Caco-2 (cell line): ENCODE measurements at regions of chr10 and their contacts with region 1.

Region 1: GRCh38 chr10:116385994-116386809 is 41.4 kb upstream of the PNLIPRP3 start:
- DNase-seq: peak in 1 of 2 experiments; percentile 39
- H3K4me3 ChIP-seq: no peak overlapping the region
- H3K4me3 Mint-ChIP-seq: no peak overlapping the region
- H3K27ac Mint-ChIP-seq: no peak overlapping the region
- H3K4me1 ChIP-seq: no peaks in the 10 kb centered on the region
- H3K4me1 Mint-ChIP-seq: peaks cover 5% of the 10 kb centered on the region
- H3K27me3 ChIP-seq: no peaks in the 10 kb centered on the region
- H3K27me3 Mint-ChIP-seq: peaks cover 11% of the 10 kb centered on the region
- CTCF ChIP-seq: peak; percentile 39 to 64

Region 2: GRCh38 chr10:115355162-115355760 is 1030.9 kb before region 1 on chr10:
- CTCF ChIA-PET with region 1: no interaction called
- POLR2A ChIA-PET with region 1: no interaction called
- intact Hi-C with region 1: loop called (anchors 1 kb)
- DNase-seq: peak; percentile 68 to 74
- H3K4me3 ChIP-seq: no peak overlapping the region
- H3K4me3 Mint-ChIP-seq: no peak overlapping the region
- H3K27ac Mint-ChIP-seq: no peak overlapping the region
- H3K4me1 ChIP-seq: no peaks in the 10 kb centered on the region
- H3K4me1 Mint-ChIP-seq: no peaks in the 10 kb centered on the region
- H3K27me3 ChIP-seq: no peaks in the 10 kb centered on the region
- H3K27me3 Mint-ChIP-seq: peaks cover 4% of the 10 kb centered on the region
- CTCF ChIP-seq: peak; percentile 77 to 81

Region 3: GRCh38 chr10:115706026-115706781 is 680.0 kb before region 1 on chr10:
- CTCF ChIA-PET with region 1: no interaction called
- POLR2A ChIA-PET with region 1: no interaction called
- intact Hi-C with region 1: loop called (anchors 1 kb)
- DNase-seq: peak in 1 of 2 experiments; percentile 13
- H3K4me3 ChIP-seq: no peak overlapping the region
- H3K4me3 Mint-ChIP-seq: no peak overlapping the region
- H3K27ac Mint-ChIP-seq: no peak overlapping the region
- H3K4me1 ChIP-seq: no peaks in the 10 kb centered on the region
- H3K4me1 Mint-ChIP-seq: no peaks in the 10 kb centered on the region
- H3K27me3 ChIP-seq: no peaks in the 10 kb centered on the region
- H3K27me3 Mint-ChIP-seq: peaks cover 10% of the 10 kb centered on the region
- CTCF ChIP-seq: peak; percentile 33 to 48

Region 4: DNA sequence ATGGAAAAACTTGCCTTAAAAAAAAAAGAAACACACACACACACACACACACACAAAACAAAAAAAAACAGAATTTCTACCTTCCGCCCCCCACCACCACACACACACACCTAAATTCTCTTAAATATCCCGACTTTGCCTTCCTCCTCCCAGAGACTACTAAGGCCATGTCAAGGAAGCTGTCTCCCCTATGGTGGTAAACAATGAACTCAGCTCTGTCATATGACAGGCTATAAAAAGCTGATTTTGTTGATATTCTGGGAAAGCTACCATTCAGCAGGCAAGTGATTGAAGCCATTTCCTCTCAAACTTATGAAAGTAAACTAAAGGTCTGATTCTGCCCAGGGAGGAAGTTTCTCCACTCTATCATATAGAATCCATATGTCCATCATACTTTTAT is 584.2 kb before region 1 on chr10:
- CTCF ChIA-PET with region 1: no interaction called
- POLR2A ChIA-PET with region 1: no interaction called
- intact Hi-C with region 1: loop called (anchors 1 kb)
- DNase-seq: no peak
- H3K4me3 ChIP-seq: no peak overlapping the region
- H3K4me3 Mint-ChIP-seq: no peak overlapping the region
- H3K27ac Mint-ChIP-seq: no peak overlapping the region
- H3K4me1 ChIP-seq: no peaks in the 10 kb centered on the region
- H3K4me1 Mint-ChIP-seq: no peaks in the 10 kb centered on the region
- H3K27me3 ChIP-seq: no peaks in the 10 kb centered on the region; the same call in 1 of the 2 replicates
- H3K27me3 Mint-ChIP-seq: peaks cover 9% of the 10 kb centered on the region
- CTCF ChIP-seq: no peak

Region 5: DNA sequence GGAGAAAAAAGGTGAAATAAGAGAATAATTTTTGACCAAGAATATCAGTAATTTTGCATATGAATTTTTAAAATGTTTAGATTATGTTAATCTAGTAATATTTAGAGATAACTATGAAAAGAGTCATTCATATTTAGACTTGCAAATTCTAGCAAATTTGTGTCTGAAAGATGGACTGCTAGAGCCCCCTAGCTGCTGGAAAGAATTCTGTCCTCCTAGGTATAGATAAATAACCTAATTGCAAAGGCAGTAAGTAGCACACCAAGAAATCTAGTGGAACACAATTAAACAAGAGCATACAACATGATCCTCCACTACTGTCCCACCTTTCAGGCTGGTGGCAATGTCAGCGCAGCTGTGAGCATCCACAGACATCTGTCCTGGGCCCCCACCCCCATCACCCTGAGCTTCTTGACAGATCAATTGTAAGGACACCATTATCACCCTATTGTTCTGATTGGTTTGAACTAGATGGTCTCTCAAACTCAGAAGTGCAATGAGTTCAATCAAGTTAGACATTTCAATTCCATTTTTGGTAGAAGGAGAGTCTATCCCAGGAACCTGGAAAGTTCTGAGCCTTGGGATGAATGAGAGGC is 98.2 kb before region 1 on chr10:
- CTCF ChIA-PET with region 1: no interaction called
- POLR2A ChIA-PET with region 1: no interaction called
- intact Hi-C with region 1: loop called (anchors 5 kb)
- DNase-seq: peak; percentile 40 to 62
- H3K4me3 ChIP-seq: no peak overlapping the region
- H3K4me3 Mint-ChIP-seq: no peak overlapping the region
- H3K27ac Mint-ChIP-seq: no peak overlapping the region
- H3K4me1 ChIP-seq: no peaks in the 10 kb centered on the region
- H3K4me1 Mint-ChIP-seq: no peaks in the 10 kb centered on the region
- H3K27me3 ChIP-seq: no peaks in the 10 kb centered on the region
- H3K27me3 Mint-ChIP-seq: peaks cover 3% of the 10 kb centered on the region
- CTCF ChIP-seq: peak; percentile 65 to 81

Region 6: DNA sequence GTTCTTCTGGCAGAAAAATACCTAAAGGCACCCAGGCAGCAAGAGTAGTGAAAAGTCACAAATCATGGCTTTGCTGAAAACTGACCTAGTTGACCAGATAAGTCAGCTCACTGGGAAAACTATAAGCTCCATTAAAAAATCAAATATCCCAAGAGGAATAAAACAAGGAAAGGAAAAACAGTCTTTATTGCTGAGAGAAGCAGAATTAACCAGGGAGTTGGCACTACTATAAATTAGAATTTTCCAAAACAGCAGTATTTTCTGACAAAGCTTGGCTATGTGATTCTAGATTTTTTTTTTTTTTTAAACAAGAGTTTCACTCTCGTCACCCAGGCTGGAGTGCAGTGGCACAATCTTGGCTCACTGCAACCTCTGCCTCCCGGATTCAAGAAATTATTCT is 49.3 kb before region 1 on chr10:
- CTCF ChIA-PET with region 1: no interaction called
- POLR2A ChIA-PET with region 1: no interaction called
- intact Hi-C with region 1: no loop called
- DNase-seq: no peak
- H3K4me3 ChIP-seq: no peak overlapping the region
- H3K4me3 Mint-ChIP-seq: no peak overlapping the region
- H3K27ac Mint-ChIP-seq: no peak overlapping the region
- H3K4me1 ChIP-seq: no peaks in the 10 kb centered on the region
- H3K4me1 Mint-ChIP-seq: peaks cover 6% of the 10 kb centered on the region
- H3K27me3 ChIP-seq: no peaks in the 10 kb centered on the region
- H3K27me3 Mint-ChIP-seq: peaks cover 8% of the 10 kb centered on the region
- CTCF ChIP-seq: no peak

Region 7: GRCh38 chr10:116538456-116538855 is 152.3 kb after region 1 on chr10:
- CTCF ChIA-PET with region 1: no interaction called
- POLR2A ChIA-PET with region 1: no interaction called
- intact Hi-C with region 1: no loop called
- DNase-seq: no peak
- H3K4me3 ChIP-seq: no peak overlapping the region
- H3K4me3 Mint-ChIP-seq: no peak overlapping the region
- H3K27ac Mint-ChIP-seq: no peak overlapping the region
- H3K4me1 ChIP-seq: no peaks in the 10 kb centered on the region
- H3K4me1 Mint-ChIP-seq: no peaks in the 10 kb centered on the region
- H3K27me3 ChIP-seq: peaks cover 2% of the 10 kb centered on the region; the same call in 1 of the 2 replicates
- H3K27me3 Mint-ChIP-seq: peaks cover 14% of the 10 kb centered on the region
- CTCF ChIP-seq: no peak

Region 8: DNA sequence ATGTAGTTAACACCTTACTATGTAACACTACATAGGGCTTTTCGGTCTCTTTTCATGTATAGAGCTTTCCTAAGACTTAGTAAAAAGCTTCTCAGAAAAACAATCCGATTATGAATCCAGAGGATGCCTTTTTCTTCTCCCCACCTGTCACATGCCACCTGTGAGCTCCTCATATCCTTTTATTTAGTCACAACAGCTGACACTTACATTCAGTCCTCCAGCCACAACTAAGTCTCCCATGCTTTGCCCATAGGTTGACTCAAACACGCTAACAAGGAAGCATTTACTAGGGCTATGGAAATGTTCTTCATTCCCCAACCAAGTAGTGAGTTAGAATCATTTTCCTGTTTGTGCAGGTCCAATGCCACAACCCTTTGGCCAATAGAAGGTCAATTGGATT is 471.0 kb after region 1 on chr10:
- CTCF ChIA-PET with region 1: no interaction called
- POLR2A ChIA-PET with region 1: no interaction called
- intact Hi-C with region 1: no loop called
- DNase-seq: no peak
- H3K4me3 ChIP-seq: no peak overlapping the region
- H3K4me3 Mint-ChIP-seq: no peak overlapping the region
- H3K27ac Mint-ChIP-seq: no peak overlapping the region
- H3K4me1 ChIP-seq: no peaks in the 10 kb centered on the region; the same call in 1 of the 2 replicates
- H3K4me1 Mint-ChIP-seq: peaks cover 2% of the 10 kb centered on the region
- H3K27me3 ChIP-seq: no peaks in the 10 kb centered on the region
- H3K27me3 Mint-ChIP-seq: no peaks in the 10 kb centered on the region
- CTCF ChIP-seq: no peak